Breast epithelium (tissue), 4 donors: ENCODE measurements at regions of chr6 and their contacts with region 1.

Region 1: GRCh38 chr6:40587240-40588069 is at the start of gene LRFN2:
- DNase-seq: peak; percentile 33 to 72
- H3K4me3 ChIP-seq: peak within 1 kb of the TSS; percentile 38 to 64 (median 51)
- H3K27ac ChIP-seq: no peak within 1 kb of the TSS
- H3K4me1 ChIP-seq: peaks cover 0 to 4% of the 10 kb centered on the region in 2 donors
- H3K27me3 ChIP-seq: peaks cover 3 to 37% of the 10 kb centered on the region in 2 donors
- CTCF ChIP-seq: peak; percentile 35 to 77 (median 62)
- POLR2A ChIP-seq: no peak
- total RNA-seq, gene LRFN2: not detected

Region 2: DNA sequence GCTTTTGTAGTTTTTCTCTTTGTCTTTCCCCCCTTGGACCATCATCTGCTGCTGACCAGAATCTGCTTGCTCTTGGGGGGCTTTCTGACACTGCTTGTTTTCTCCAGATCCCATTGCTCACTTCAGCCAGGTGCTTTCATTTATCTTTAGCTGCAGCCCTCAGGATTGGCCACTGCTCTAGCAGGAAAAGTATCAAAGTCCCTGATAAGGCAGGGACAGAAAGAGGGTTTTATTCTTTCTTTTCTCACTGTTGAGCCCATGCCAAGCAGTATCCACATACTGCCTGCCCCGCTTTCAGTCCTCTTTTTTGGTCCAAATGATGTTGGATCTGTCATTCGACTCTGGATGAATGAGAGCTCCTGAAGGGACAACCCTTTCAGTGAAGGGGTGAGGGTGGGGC is 1731.0 kb before region 1 on chr6:
- intact Hi-C with region 1: loop called (anchors 5 kb)
- DNase-seq: no peak
- H3K4me3 ChIP-seq: no peak overlapping the region
- H3K27ac ChIP-seq: no peak overlapping the region
- H3K4me1 ChIP-seq: no peaks in the 10 kb centered on the region
- H3K27me3 ChIP-seq: no peaks in the 10 kb centered on the region
- CTCF ChIP-seq: no peak
- POLR2A ChIP-seq: no peak

Region 3: DNA sequence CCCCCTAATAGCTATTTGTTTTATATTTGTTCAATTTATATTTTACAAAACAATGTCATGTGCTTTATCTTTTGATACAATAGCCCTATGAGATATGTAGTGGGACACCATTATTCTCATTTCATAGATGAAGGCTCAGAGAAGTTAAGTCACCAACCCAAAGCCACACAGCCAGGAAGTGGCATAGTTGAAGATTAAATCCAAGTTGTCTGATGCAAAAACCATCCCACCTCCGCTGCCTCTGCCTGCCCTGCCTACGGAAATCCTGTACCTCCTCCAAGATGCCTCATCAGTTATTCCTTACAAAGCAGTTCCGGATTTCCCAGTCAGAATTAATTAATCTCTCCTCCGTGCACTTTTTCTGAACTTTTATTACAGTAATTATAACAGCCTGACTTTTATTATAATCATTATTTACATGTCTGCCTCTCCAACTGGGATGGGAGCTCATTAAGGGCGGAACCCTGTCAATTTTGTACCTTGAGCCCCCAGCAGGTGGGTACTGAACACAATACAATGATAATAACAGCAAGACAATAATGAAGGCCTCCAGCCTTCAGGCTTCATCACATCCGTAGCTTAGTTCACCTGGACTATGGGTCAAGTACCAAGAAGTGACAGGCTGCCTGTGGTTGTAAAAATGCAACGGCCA is 55.0 kb before region 1 on chr6:
- intact Hi-C with region 1: loop called (anchors 2 kb)
- DNase-seq: no peak
- H3K4me3 ChIP-seq: no peak overlapping the region
- H3K27ac ChIP-seq: no peak overlapping the region
- H3K4me1 ChIP-seq: no peaks in the 10 kb centered on the region
- H3K27me3 ChIP-seq: no peaks in the 10 kb centered on the region
- CTCF ChIP-seq: no peak
- POLR2A ChIP-seq: no peak

Region 4: GRCh38 chr6:41367700-41368099 is 780.2 kb after region 1 on chr6:
- intact Hi-C with region 1: no loop called
- DNase-seq: no peak
- H3K4me3 ChIP-seq: no peak overlapping the region
- H3K27ac ChIP-seq: no peak overlapping the region
- H3K4me1 ChIP-seq: peaks cover 0 to 3% of the 10 kb centered on the region in 2 donors
- H3K27me3 ChIP-seq: peaks cover 0 to 28% of the 10 kb centered on the region in 2 donors
- CTCF ChIP-seq: peak in 2 of 3 donors; percentile 43 to 46
- POLR2A ChIP-seq: no peak